ENCODE measurements at regions of chr10 and their contacts with region 1.

Region 1: GRCh38 chr10:28334296-28334695 is 31.4 kb upstream of the MPP7 start:
- DNase-seq: peak; percentile 58
- H3K4me3 Mint-ChIP-seq: peak overlapping the region; percentile 79
- H3K27ac Mint-ChIP-seq: peak overlapping the region; percentile 98
- H3K4me1 Mint-ChIP-seq: peaks cover 49% of the 10 kb centered on the region
- H3K27me3 Mint-ChIP-seq: peaks cover 2% of the 10 kb centered on the region

Region 2: GRCh38 chr10:27504007-27504807 is 830.1 kb before region 1 on chr10 and contains the start of gene RAB18:
- intact Hi-C with region 1: loop called (anchors 10 kb)
- DNase-seq: peak; percentile 98
- H3K4me3 Mint-ChIP-seq: peak within 1 kb of the TSS; percentile 93
- H3K27ac Mint-ChIP-seq: peak within 1 kb of the TSS; percentile 91
- H3K4me1 Mint-ChIP-seq: peaks cover 46% of the 10 kb centered on the region
- H3K27me3 Mint-ChIP-seq: no peaks in the 10 kb centered on the region
- total RNA-seq, gene RAB18: 55.9 and 56.4 TPM in 2 replicates

Region 3: GRCh38 chr10:28302638-28303488 is 31.4 kb before region 1 on chr10 and contains the start of gene MPP7:
- intact Hi-C with region 1: loop called (anchors 1 kb)
- DNase-seq: peak; percentile 94
- H3K4me3 Mint-ChIP-seq: peak within 1 kb of the TSS; percentile 88
- H3K27ac Mint-ChIP-seq: no peak within 1 kb of the TSS
- H3K4me1 Mint-ChIP-seq: peaks cover 33% of the 10 kb centered on the region
- H3K27me3 Mint-ChIP-seq: peaks cover 42% of the 10 kb centered on the region
- total RNA-seq, gene MPP7: 0.60 and 0.73 TPM in 2 replicates

Region 4: GRCh38 chr10:28367929-28368484 is 33.7 kb after region 1 on chr10:
- intact Hi-C with region 1: loop called (anchors 1 kb)
- DNase-seq: peak; percentile 60
- H3K4me3 Mint-ChIP-seq: peak overlapping the region; percentile 37
- H3K27ac Mint-ChIP-seq: peak overlapping the region; percentile 83
- H3K4me1 Mint-ChIP-seq: peaks cover 24% of the 10 kb centered on the region
- H3K27me3 Mint-ChIP-seq: no peaks in the 10 kb centered on the region

Region 5: DNA sequence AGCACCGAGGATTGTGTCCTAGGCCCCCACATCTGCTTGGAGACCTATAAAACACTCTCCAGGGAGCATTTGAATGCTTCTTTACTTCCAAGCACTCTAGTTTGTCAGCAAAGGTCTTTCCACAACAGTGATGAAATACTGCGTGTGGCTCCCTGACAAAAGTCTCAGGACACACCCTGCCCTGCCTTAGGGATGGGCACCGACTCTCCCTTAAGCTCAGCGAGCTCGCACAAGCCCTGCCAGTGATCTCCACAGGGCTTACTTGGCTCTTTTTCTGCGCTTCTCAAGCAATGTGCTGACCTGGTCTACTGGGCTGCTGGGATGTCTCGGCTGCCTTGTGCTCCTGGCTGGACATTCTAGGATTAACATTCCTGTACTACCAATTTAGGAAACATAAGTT is 52.8 kb after region 1 on chr10:
- intact Hi-C with region 1: no loop called
- DNase-seq: no peak
- H3K4me3 Mint-ChIP-seq: no peak overlapping the region
- H3K27ac Mint-ChIP-seq: no peak overlapping the region
- H3K4me1 Mint-ChIP-seq: peaks cover 5% of the 10 kb centered on the region
- H3K27me3 Mint-ChIP-seq: peaks cover 14% of the 10 kb centered on the region